ENCODE measurements at regions of chr1 and their contacts with region 1.

Region 1: DNA sequence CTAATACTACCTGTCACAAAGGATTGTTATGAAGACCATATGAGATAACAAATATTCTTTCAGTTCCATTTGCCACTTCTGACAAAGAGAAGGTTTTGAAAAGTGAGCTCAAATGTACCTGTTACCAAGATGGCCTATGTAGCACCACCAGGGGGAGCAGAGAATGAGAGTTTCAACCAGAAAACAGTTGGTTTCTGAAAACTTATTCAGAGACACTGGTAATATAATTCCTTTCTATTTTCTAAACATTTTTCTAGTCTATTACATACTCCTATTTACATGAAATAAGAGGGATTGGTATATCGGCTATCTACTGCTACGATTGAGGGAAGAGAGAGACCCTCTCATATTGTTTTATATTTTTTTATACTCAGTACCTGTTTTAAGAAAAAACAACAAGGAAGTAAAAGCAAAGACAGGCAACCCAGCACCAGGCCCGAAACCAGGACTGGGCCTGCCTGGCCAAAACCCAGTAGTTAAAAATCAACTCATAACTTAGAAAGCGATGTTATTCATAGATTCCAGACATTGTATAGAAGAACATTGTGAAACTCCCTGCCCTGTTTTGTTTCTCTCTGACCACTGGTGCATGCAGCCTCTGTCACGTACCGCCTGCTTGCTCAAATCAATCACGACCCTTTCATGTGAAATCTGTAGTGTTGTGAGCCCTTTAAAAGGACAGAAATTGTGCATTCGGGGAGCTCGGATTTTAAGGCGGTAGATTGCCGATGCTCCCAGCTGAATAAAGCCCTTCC is 48.3 kb downstream of the IL23R start:
- DNase-seq: peak; percentile 68
- ATAC-seq: peak; percentile 86
- H3K4me3 ChIP-seq: peak overlapping the region; percentile 14; the same call in 1 of the 2 replicates
- H3K27ac ChIP-seq: peak overlapping the region; percentile 71
- H3K4me1 ChIP-seq: peaks cover 31% of the 10 kb centered on the region
- H3K27me3 ChIP-seq: no peaks in the 10 kb centered on the region
- CTCF ChIP-seq: peak; percentile 33 to 67 (median 66)
- EP300 ChIP-seq: 0 out of 4 replicates have a peak, but pooled peaks of 1 of the 2 experiments have one; percentile 3
- POLR2A ChIP-seq: no peak
- RAD21 ChIP-seq: peak; percentile 52

Region 2: GRCh38 chr1:66764994-66765578 is 449.5 kb before region 1 on chr1:
- CTCF ChIA-PET with region 1: interaction called, 14 read pairs
- POLR2A ChIA-PET with region 1: no interaction called
- RAD21 ChIA-PET with region 1: interaction called, 5 read pairs
- SMC1A ChIA-PET with region 1: interaction called, 18 read pairs
- in situ Hi-C with region 1: no loop called
- intact Hi-C with region 1: loop called (anchors 2 kb)
- DNase-seq: no peak
- ATAC-seq: peak; percentile 80
- H3K4me3 ChIP-seq: no peak overlapping the region
- H3K27ac ChIP-seq: no peak overlapping the region
- H3K4me1 ChIP-seq: no peaks in the 10 kb centered on the region
- H3K27me3 ChIP-seq: no peaks in the 10 kb centered on the region
- CTCF ChIP-seq: peak; percentile 50 to 75 (median 69)
- EP300 ChIP-seq: no peak
- POLR2A ChIP-seq: no peak
- RAD21 ChIP-seq: peak; percentile 85

Region 3: DNA sequence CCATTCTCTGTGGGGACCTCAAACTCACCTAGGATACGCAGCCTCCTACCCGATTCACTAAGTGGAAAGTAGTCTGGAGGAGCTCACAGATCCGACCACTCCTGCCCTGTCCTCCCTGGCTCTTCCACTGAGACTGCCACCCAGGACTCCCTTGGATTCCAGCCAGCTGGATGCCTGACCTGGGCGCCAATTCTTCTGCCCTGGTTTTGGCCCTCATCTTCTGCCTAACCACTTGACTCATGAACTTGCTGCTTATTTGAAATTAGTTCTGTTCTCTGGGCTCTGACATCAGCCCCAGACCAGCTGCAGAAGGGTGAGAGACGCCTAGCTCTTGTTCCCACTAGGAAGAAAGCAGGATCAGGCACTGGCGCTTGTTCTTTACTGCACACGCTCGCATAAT is 209.5 kb before region 1 on chr1:
- CTCF ChIA-PET with region 1: interaction called, 36 read pairs
- POLR2A ChIA-PET with region 1: no interaction called
- RAD21 ChIA-PET with region 1: interaction called, 4 read pairs
- SMC1A ChIA-PET with region 1: interaction called, 5 read pairs
- in situ Hi-C with region 1: no loop called
- intact Hi-C with region 1: no loop called
- DNase-seq: no peak
- ATAC-seq: no peak
- H3K4me3 ChIP-seq: no peak overlapping the region
- H3K27ac ChIP-seq: no peak overlapping the region
- H3K4me1 ChIP-seq: no peaks in the 10 kb centered on the region
- H3K27me3 ChIP-seq: no peaks in the 10 kb centered on the region
- CTCF ChIP-seq: no peak
- EP300 ChIP-seq: no peak
- POLR2A ChIP-seq: no peak
- RAD21 ChIP-seq: no peak

Region 4: DNA sequence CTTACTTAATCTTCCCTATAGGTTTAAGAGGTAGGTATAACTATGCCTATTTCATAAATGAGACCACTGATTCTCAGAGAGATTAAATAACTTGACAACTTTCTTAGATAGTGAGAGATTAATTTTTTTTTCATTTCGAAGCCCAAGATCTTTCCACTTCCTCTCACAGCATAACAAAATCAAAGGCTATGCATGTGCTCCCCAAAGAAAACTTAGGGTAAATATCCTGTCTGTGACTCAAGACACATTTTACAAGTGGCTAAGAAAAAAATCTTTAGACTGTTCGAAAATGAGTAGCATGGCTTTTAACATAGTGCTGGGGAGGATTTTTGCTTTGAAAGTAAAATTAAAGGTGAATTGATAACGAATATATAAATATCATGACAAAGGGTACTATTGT is 71.7 kb before region 1 on chr1:
- CTCF ChIA-PET with region 1: interaction called, 193 read pairs
- POLR2A ChIA-PET with region 1: interaction called, 6 read pairs
- RAD21 ChIA-PET with region 1: interaction called, 102 read pairs
- SMC1A ChIA-PET with region 1: interaction called, 212 read pairs
- in situ Hi-C with region 1: no loop called
- intact Hi-C with region 1: loop called (anchors 1 kb)
- DNase-seq: no peak
- ATAC-seq: no peak
- H3K4me3 ChIP-seq: no peak overlapping the region
- H3K27ac ChIP-seq: no peak overlapping the region
- H3K4me1 ChIP-seq: 0 out of 2 replicates have a peak, but pooled peaks cover 2% of the 10 kb centered on the region
- H3K27me3 ChIP-seq: no peaks in the 10 kb centered on the region
- CTCF ChIP-seq: no peak
- EP300 ChIP-seq: no peak
- POLR2A ChIP-seq: no peak
- RAD21 ChIP-seq: no peak

Region 5: DNA sequence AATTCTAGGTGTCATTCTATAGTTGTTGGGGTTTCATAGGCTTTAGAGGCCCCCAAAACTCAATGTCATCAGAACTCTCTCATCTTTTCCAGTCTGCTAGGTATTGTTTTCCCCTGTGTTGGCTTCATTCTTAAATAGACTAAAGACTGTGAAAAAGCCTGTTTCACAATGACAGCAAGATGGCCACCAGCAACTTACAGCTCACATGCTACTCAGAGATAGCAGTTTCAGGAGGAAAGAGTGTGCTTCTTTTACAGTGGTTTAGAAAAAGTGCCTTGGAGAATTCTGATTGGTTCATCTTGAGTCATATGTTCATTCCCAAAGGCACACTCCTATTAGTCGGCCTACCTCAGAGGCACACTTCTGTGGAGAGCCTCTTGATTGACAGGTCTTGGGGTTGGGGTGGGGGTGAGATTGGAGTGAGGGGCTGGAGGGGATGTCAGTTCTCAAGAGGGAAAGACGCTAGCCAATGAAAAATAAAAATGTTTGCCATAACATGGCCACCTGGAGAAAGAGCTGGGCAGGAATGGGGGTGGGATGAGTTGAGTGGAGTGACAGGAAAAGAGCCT is 39.8 kb before region 1 on chr1:
- CTCF ChIA-PET with region 1: interaction called, 163 read pairs
- POLR2A ChIA-PET with region 1: interaction called, 4 read pairs
- RAD21 ChIA-PET with region 1: interaction called, 93 read pairs
- SMC1A ChIA-PET with region 1: interaction called, 54 read pairs
- in situ Hi-C with region 1: no loop called
- intact Hi-C with region 1: no loop called
- DNase-seq: no peak
- ATAC-seq: peak; percentile 72
- H3K4me3 ChIP-seq: no peak overlapping the region
- H3K27ac ChIP-seq: no peak overlapping the region
- H3K4me1 ChIP-seq: peaks cover 16% of the 10 kb centered on the region
- H3K27me3 ChIP-seq: no peaks in the 10 kb centered on the region
- CTCF ChIP-seq: no peak
- EP300 ChIP-seq: peak in 1 of 2 experiments; percentile 9; a peak in 1 of 4 replicates
- POLR2A ChIP-seq: no peak
- RAD21 ChIP-seq: no peak

Region 6: DNA sequence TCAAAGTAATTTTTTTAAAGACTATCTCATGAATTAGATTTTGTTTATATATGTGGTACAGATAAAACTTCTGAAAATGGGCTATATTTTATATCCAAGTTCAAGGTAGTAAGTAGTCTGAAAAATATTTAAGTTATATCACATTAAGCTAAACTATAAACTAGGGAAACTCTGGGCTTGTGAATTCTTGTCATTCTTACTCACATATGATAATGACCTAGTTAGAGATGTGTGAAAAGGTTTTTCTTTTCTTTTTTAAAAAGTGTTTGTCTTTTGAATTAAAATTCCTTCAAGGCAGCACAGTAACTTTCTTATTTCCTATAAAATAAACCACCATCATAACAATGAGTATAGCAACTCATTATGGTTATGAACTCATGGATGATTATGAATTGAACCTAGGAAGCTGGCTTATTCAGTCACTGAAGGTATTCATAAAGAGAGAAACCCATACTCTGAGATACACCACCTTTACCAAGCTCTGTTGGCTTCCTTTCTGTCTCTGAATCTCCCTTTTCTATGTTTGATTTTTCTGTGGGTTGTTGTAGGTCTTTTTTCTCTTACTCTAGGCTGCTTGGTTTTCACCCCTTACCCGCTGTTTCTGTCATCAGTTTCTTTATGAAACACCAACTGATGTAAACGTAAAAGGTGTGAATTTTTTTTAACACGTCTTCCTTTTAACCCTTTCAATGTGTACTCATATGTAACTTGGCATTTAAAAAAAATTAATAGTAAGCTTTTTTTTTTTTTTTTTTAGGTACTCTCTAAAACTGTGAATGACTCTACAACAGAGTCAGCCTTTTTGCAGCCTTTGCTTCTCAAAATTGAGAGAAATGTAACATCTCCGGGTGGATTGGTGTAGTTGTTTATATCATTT is 118.3 kb after region 1 on chr1:
- CTCF ChIA-PET with region 1: interaction called, 26 read pairs
- POLR2A ChIA-PET with region 1: no interaction called
- RAD21 ChIA-PET with region 1: interaction called, 22 read pairs
- SMC1A ChIA-PET with region 1: interaction called, 57 read pairs
- in situ Hi-C with region 1: no loop called
- intact Hi-C with region 1: loop called (anchors 5 kb)
- DNase-seq: peak; percentile 91
- ATAC-seq: peak; percentile 97
- H3K4me3 ChIP-seq: no peak overlapping the region; the same call in 1 of the 2 replicates
- H3K27ac ChIP-seq: peak overlapping the region; percentile 83
- H3K4me1 ChIP-seq: peaks cover 51% of the 10 kb centered on the region
- H3K27me3 ChIP-seq: peaks cover 0 to 2% of the 10 kb centered on the region in 2 experiments; a peak in 1 of 4 replicates
- CTCF ChIP-seq: no peak
- EP300 ChIP-seq: peak; percentile 99
- POLR2A ChIP-seq: no peak
- RAD21 ChIP-seq: peak; percentile 17; the same call in 1 of the 2 replicates

Region 7: DNA sequence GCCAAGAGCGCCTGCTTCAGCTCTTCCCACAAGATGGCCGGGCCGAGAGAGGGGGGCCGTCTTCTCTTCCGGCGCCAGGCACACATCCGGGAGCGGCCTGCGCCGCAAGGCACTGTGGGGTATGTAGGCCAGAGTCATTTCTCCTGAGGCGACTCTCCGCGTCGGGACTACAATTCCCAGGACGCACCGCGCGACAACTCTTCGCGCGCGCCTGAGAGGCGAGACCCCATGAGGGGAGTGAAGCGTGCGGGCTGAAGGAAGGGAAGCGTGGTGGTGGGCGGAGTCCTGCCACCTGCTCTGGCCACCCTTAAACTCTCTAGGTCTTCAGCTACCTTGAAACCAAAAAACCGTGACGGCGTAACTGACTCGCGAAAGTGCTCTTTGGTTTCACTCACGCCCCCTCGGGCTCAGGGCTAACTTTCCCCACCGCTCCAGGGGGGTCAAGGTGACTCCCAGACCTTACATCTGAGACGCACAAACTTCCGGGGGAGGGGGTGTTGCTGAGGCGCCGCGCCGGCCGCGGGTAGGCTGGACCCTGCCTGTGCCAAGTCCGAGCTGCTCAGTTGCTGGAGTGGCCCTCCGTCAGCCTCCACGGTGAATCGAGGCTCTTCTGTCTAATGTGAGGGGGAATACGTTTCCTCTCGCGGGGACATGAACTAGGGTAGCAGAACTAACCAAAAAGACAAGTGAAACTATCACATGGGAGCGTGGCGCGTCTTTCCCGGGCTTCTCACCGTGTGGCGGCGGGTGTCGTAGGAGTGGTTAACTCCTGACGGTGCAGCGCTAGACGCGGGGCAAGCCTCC is 216.0 kb after region 1 on chr1 and contains the start of gene SERBP1:
- CTCF ChIA-PET with region 1: interaction called, 38 read pairs
- POLR2A ChIA-PET with region 1: interaction called, 3 read pairs
- RAD21 ChIA-PET with region 1: interaction called, 3 read pairs
- SMC1A ChIA-PET with region 1: interaction called, 3 read pairs
- in situ Hi-C with region 1: no loop called
- intact Hi-C with region 1: loop called (anchors 1 kb)
- DNase-seq: peak; percentile 98
- ATAC-seq: peak; percentile 86
- H3K4me3 ChIP-seq: peak within 1 kb of the TSS; percentile 91
- H3K27ac ChIP-seq: peak within 1 kb of the TSS; percentile 96
- H3K4me1 ChIP-seq: peaks cover 15% of the 10 kb centered on the region
- H3K27me3 ChIP-seq: no peaks in the 10 kb centered on the region
- CTCF ChIP-seq: no peak
- EP300 ChIP-seq: peak in 1 of 2 experiments; percentile 50; a peak in 2 of 4 replicates
- POLR2A ChIP-seq: peak; percentile 59
- RAD21 ChIP-seq: no peak
- polyA plus RNA-seq, gene SERBP1: 76.7 to 111 TPM

Measured in GM12878 (cell line).